ENCODE measurements at regions of chr19 and their contacts with region 1.

Region 1: DNA sequence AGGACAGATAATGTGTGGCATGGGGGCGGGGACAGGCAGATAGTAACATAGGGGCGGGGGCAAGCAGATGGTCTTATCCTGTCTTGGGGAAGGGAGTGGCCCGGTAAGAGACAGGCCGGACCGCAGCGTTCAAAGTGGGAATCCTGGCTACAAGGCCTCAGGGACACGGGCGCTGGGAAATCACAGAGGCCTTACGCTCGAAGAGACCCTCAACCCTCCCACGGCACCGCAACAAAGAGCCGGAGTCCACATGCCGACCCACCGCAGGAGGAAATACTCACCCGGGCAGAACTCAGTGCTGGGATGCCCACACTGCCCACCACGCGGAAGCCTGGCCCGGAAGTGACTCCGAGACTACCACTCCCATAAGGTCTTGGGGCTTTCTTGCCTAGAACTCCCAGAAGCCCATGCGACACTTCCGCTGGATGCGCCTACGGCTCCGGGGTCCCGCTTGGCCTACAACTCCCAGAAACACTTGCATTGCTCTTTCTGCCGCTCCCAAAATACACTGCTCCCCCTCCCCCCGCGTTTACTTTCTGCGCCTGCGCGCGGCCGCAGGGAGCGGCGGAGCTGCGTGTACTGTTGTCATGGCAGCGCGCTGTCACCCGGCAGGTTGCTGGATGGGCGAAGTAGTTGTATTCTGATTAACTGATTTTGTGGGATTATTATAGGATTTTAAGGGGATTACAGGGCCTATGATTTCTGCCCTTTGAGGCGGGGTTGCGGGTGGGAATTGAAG is at the start of gene CTU1:
- DNase-seq: peak; percentile 93 to 99 (median 98)
- ATAC-seq: peak; percentile 99
- H3K4me3 ChIP-seq: peak within 1 kb of the TSS; percentile 92
- H3K4me3 Mint-ChIP-seq: peak within 1 kb of the TSS; percentile 90 to 100 (median 98)
- H3K27ac ChIP-seq: peak within 1 kb of the TSS; percentile 77
- H3K27ac Mint-ChIP-seq: peak within 1 kb of the TSS; percentile 92 to 99 (median 97)
- H3K4me1 ChIP-seq: peaks cover 13% of the 10 kb centered on the region in 2 donors
- H3K4me1 Mint-ChIP-seq: peaks cover 28 to 48% (median 42%) of the 10 kb centered on the region in 7 donors
- H3K27me3 ChIP-seq: no peaks in the 10 kb centered on the region
- H3K27me3 Mint-ChIP-seq: no peaks in the 10 kb centered on the region
- total RNA-seq, gene CTU1: 3.3 to 11.8 (median 10.5) TPM

Region 2: GRCh38 chr19:50329146-50329925 is 778.9 kb before region 1 on chr19 and contains the start of gene KCNC3:
- CTCF ChIA-PET with region 1: no interaction called
- POLR2A ChIA-PET with region 1: no interaction called
- intact Hi-C with region 1: loop called in 1 of 2 experiments (anchors 1 kb)
- DNase-seq: peak in 8 of 9 donors; percentile 69 to 96 (median 86)
- ATAC-seq: peak; percentile 77
- H3K4me3 ChIP-seq: peak within 1 kb of the TSS; percentile 39
- H3K4me3 Mint-ChIP-seq: peak within 1 kb of the TSS; percentile 72 to 97 (median 86)
- H3K27ac ChIP-seq: no peak within 1 kb of the TSS
- H3K27ac Mint-ChIP-seq: peak within 1 kb of the TSS; percentile 55 to 96 (median 87)
- H3K4me1 ChIP-seq: peaks cover 42 to 62% of the 10 kb centered on the region in 2 donors
- H3K4me1 Mint-ChIP-seq: peaks cover 43 to 75% (median 73%) of the 10 kb centered on the region in 7 donors
- H3K27me3 ChIP-seq: peaks cover 15 to 28% of the 10 kb centered on the region in 2 donors
- H3K27me3 Mint-ChIP-seq: peaks cover 20 to 62% (median 41%) of the 10 kb centered on the region in 5 donors
- total RNA-seq, gene KCNC3: 1.9 to 11.1 (median 2.4) TPM

Region 3: DNA sequence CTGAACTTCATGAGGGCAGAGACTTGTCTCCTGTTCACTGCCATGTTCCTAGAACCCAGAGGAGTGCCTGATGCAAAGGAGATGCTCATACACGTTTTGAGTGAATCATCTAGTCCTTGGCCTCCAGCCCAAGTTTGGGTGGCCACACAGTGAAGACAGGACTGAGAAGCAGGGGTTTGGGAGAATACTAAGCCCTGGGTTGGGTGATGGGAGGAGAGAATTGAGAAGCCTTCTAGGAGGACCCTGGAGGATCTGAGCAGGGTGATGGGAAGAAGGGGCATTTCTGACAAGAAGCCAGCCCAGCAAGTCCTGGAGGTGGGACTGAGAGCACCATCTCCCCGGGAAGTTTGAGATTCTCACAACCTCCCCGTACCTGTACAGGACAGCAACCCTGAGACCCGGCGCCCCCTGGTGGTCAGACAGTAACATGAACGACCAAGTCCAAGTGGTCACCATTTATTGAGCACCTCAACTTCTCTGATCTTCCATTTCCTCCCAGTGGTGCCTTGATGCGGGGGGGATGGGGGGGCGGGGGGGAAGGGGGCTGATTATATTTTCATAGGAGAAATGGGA is 11.0 kb before region 1 on chr19:
- CTCF ChIA-PET with region 1: interaction called, 3 read pairs
- POLR2A ChIA-PET with region 1: no interaction called
- intact Hi-C with region 1: loop called in 1 of 2 experiments (anchors 1 kb)
- DNase-seq: peak; percentile 20 to 75 (median 44)
- ATAC-seq: peak; percentile 57
- H3K4me3 ChIP-seq: no peak overlapping the region
- H3K4me3 Mint-ChIP-seq: peak overlapping the region in 6 of 10 donors; percentile 2 to 56 (median 30)
- H3K27ac ChIP-seq: peak overlapping the region; percentile 28
- H3K27ac Mint-ChIP-seq: peak overlapping the region in 5 of 9 donors; percentile 23 to 66 (median 36)
- H3K4me1 ChIP-seq: peaks cover 5 to 17% of the 10 kb centered on the region in 2 donors
- H3K4me1 Mint-ChIP-seq: peaks cover 19 to 42% (median 26%) of the 10 kb centered on the region in 7 donors
- H3K27me3 ChIP-seq: no peaks in the 10 kb centered on the region
- H3K27me3 Mint-ChIP-seq: no peaks in the 10 kb centered on the region

Region 4: DNA sequence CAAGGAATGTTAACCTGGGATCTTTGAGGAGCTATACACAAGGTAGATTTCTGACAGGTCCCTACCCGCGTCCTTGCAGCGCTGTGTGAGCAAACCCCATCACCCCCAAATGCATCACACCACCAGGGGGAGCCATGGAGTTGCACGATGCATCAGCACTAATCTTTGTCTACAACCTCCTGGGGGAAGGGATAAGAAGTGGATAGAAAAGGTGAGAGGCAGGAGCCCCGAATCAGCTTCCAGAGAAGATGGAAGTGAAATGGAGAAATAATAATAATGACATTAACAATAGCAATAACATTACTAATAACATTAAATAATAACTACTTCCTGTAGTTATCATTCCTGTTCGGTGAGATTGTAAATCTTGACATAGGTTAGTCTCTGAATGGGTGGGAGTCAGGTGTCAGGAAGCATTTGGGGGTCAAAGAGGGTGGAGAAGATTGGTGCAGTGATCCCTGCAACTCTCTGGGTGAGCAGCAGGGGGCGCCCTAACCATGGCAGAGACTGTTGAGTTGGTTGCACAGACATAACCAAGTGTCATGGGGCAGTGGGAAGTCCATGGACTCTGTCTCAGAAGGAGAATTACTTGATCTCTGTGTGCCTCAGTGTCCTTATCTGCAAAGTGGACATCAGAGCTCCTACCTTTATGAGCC is 50.4 kb after region 1 on chr19:
- CTCF ChIA-PET with region 1: interaction called, 4 read pairs
- POLR2A ChIA-PET with region 1: interaction called, 5 read pairs
- intact Hi-C with region 1: loop called in 1 of 2 experiments (anchors 1 kb)
- DNase-seq: peak; percentile 21 to 82 (median 56)
- ATAC-seq: peak; percentile 89
- H3K4me3 ChIP-seq: no peak overlapping the region
- H3K4me3 Mint-ChIP-seq: no peak overlapping the region
- H3K27ac ChIP-seq: no peak overlapping the region
- H3K27ac Mint-ChIP-seq: peak overlapping the region in 1 of 9 donors; percentile 56
- H3K4me1 ChIP-seq: peaks cover 0 to 4% of the 10 kb centered on the region in 2 donors
- H3K4me1 Mint-ChIP-seq: peaks cover 0 to 24% (median 11%) of the 10 kb centered on the region in 7 donors
- H3K27me3 ChIP-seq: no peaks in the 10 kb centered on the region
- H3K27me3 Mint-ChIP-seq: peaks cover 0 to 24% (median 0%) of the 10 kb centered on the region in 5 donors

Region 5: DNA sequence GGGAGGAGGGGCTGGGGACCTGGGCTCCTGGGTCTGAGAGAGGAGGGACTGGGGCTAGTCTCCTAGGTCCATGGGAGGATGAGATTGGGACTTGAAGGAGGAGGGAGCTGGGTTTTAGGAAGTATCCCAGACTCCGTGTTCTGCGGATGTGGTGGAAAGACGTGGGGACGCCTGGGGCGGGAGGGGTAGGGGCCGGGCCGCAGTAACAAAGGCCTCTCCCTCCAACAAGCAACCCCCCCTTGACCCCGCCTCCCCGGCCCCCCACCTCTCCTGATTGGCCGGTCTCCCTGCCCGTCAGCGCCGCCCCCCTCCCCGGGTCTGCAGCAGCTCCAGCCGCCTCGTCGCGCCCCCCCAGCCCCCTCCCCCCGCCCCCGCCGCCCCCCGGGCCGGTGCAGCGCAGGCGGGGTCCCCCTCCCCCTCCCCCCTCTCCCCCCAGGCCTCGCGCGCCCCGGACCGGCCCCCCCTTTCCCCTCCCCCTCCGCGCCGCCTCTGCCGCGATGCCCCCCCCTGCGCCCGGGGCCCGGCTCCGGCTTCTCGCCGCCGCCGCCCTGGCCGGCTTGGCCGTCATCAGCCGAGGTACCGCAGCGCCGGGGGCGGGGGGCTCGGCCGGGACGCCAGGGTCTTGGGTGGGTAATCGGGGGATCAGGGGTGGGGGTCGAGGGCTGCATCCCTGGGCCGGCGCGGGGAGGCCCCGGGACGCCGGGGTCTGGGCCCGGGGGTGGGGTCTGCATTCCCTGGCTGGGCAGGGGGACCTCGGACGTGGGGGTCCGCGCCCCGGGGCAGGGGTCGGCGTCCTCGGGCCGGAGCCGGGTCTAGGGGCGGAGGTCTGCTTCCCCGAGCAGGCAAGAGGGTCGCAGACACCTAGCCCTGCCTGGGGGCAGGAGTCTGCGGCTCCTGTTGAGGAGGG is 203.4 kb after region 1 on chr19 and contains the start of gene IGLON5:
- CTCF ChIA-PET with region 1: no interaction called
- POLR2A ChIA-PET with region 1: no interaction called
- intact Hi-C with region 1: no loop called
- DNase-seq: no peak
- ATAC-seq: no peak
- H3K4me3 ChIP-seq: no peak within 1 kb of the TSS
- H3K4me3 Mint-ChIP-seq: peak within 1 kb of the TSS in 1 of 10 donors; percentile 5
- H3K27ac ChIP-seq: no peak within 1 kb of the TSS
- H3K27ac Mint-ChIP-seq: no peak within 1 kb of the TSS
- H3K4me1 ChIP-seq: no peaks in the 10 kb centered on the region
- H3K4me1 Mint-ChIP-seq: peaks cover 0 to 16% (median 8%) of the 10 kb centered on the region in 7 donors
- H3K27me3 ChIP-seq: peaks cover 0 to 7% of the 10 kb centered on the region in 2 donors
- H3K27me3 Mint-ChIP-seq: peaks cover 32 to 70% (median 68%) of the 10 kb centered on the region in 5 donors
- total RNA-seq, gene IGLON5: not detected

Region 6: DNA sequence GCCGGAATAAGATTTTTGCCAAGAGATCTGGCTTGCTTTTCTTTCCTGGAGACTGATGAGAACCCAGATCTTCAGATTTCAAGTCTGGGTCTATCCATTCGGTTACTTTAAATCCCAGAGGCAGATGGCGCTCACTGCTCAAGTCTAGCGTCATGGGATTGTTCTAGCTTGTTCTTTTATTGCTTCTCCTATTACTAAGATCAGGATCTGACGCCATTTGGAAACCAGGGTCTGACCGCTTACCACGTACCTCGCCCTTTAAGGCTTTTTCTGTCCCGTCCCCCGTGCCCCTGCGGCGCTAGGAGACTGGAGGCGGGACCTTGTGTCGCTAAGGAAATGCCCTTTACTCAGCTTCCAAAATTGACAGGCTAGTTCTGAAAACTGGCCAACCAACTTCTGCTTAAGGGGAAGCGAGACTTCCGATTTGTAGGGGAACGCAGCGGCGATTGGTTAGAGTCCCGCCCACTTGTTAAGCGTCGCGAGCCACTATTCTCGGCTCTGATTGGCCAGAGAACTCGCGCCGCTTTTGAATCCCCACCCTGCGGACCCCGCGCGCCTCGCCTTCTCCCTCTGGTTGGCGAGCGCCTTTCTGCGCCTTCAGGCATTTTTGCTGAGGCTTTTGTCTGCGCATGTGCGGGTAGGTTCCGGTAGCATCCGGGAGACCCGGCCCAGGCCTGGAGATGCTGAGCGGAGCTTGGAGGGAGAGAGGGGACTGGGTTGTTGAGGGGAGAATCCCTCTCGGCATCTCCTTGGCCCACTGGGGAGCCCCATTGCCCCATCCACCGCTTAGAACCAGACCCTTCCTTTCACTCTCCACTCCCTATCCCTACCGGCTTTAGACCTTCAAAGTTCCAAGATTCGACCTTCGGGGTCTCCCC is 286.0 kb after region 1 on chr19:
- CTCF ChIA-PET with region 1: no interaction called
- POLR2A ChIA-PET with region 1: no interaction called
- intact Hi-C with region 1: loop called in 1 of 2 experiments (anchors 2 kb)
- DNase-seq: peak; percentile 64 to 91 (median 86)
- ATAC-seq: peak; percentile 95
- H3K4me3 ChIP-seq: peak overlapping the region; percentile 46
- H3K4me3 Mint-ChIP-seq: peak overlapping the region; percentile 79 to 91 (median 86)
- H3K27ac ChIP-seq: peak overlapping the region; percentile 50
- H3K27ac Mint-ChIP-seq: peak overlapping the region; percentile 32 to 97 (median 73)
- H3K4me1 ChIP-seq: peaks cover 0 to 14% of the 10 kb centered on the region in 2 donors
- H3K4me1 Mint-ChIP-seq: peaks cover 6 to 60% (median 16%) of the 10 kb centered on the region in 7 donors
- H3K27me3 ChIP-seq: no peaks in the 10 kb centered on the region
- H3K27me3 Mint-ChIP-seq: peaks cover 0 to 4% (median 0%) of the 10 kb centered on the region in 5 donors

Region 7: DNA sequence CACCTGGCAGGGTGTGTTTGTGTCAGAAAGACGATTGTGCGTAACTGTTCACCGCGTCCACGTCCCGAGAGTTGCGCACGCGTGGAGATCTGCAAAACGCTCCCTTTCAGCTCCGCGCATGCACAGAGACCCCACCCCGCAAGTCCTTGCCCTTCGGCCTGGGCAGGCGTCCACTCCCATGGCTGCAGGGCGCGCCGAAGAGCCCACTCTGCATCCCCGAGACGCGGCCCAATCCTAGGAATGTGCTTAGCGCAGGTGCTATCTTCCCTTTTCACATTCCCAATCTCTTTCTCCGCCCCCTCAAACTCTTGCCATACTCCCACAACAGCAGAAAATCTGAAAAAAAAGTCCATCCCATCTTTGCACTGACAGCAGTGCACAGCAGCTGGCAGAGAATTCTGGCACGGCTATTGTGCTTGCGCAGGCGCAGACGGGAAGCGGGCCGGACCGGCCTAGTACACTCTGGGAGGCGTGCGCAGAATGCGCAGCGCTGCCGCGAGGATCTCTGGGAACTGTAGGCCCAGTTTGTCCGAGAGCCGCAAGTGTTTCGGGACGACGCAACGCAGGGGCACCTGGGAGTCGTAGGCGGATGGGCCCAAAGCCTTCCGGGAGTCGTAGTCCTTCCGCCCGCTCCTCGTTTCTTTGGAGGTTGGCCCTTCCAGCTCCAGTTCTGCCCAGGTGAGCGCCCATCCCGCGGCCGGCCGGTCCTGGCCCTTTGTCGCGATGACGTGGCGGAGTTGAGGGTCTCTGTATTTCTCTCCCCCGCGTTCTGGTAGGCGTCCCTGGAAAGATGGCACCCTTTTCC is 485.9 kb after region 1 on chr19:
- CTCF ChIA-PET with region 1: no interaction called
- POLR2A ChIA-PET with region 1: no interaction called
- intact Hi-C with region 1: loop called in 1 of 2 experiments (anchors 1 kb)
- DNase-seq: peak; percentile 87 to 95 (median 91)
- ATAC-seq: peak; percentile 100
- H3K4me3 ChIP-seq: peak overlapping the region; percentile 88
- H3K4me3 Mint-ChIP-seq: peak overlapping the region; percentile 88 to 99 (median 96)
- H3K27ac ChIP-seq: peak overlapping the region; percentile 66
- H3K27ac Mint-ChIP-seq: peak overlapping the region; percentile 29 to 97 (median 78)
- H3K4me1 ChIP-seq: peaks cover 6 to 17% of the 10 kb centered on the region in 2 donors
- H3K4me1 Mint-ChIP-seq: peaks cover 19 to 37% (median 24%) of the 10 kb centered on the region in 7 donors
- H3K27me3 ChIP-seq: no peaks in the 10 kb centered on the region
- H3K27me3 Mint-ChIP-seq: peaks cover 0 to 23% (median 15%) of the 10 kb centered on the region in 5 donors

Measured in naive thymus-derived CD4-positive, alpha-beta T cell (primary cell).